ENCODE measurements at regions of chr7 and their contacts with region 1.

Region 1: DNA sequence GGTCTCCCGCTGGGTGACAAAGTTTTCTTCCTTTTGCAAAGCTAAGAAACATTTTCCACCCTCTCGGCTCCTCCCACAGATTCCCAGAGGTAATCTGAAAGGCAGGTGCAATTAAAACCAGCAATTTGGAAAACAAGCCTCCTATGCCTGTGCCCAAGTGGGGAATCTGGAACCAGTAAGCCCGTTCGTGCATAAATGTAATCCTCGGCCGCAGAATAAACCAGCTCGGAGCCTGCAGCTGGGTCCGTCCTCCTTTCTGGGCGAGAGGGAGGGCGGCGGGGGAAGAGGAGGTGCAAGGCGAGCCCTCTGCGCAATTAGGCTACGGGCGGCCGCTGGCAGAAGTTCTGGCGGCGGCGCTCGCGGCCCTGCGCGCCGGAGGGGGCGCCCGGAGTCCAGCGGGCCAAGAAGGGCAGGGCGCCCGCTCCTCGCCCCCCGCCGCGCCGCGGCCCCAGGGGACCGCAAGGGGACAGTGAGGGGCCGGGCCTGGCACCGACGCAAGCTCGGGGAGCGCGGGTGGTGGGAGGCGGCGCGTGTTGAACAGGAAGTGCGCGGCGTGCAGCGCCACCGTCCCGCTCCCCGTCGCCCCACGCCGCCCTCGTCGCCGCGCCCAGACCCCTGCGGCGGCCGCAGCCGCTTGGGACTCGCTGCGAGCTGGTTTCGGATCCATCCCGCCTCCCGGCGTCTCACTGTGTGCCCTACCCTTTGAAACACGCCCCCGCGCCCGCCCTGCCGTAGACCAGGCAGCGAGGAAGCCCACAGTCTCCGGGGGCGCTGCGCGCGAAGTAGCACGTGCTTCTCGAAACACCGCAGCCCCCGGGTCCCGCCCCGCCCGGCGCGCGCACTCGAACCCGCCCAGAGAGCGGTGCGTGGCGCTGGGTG is at the start of gene PRKAG2:
- DNase-seq: peak; percentile 74 to 87
- ATAC-seq: peak; percentile 45 to 70 (median 58)
- H3K4me3 ChIP-seq: peak within 1 kb of the TSS; percentile 86
- H3K27ac ChIP-seq: peak within 1 kb of the TSS; percentile 82
- H3K4me1 ChIP-seq: peaks cover 3% of the 10 kb centered on the region
- H3K27me3 ChIP-seq: no peaks in the 10 kb centered on the region
- CTCF ChIP-seq: no peak
- total RNA-seq, gene PRKAG2: 9.3 to 31.5 (median 15.5) TPM

Region 2: DNA sequence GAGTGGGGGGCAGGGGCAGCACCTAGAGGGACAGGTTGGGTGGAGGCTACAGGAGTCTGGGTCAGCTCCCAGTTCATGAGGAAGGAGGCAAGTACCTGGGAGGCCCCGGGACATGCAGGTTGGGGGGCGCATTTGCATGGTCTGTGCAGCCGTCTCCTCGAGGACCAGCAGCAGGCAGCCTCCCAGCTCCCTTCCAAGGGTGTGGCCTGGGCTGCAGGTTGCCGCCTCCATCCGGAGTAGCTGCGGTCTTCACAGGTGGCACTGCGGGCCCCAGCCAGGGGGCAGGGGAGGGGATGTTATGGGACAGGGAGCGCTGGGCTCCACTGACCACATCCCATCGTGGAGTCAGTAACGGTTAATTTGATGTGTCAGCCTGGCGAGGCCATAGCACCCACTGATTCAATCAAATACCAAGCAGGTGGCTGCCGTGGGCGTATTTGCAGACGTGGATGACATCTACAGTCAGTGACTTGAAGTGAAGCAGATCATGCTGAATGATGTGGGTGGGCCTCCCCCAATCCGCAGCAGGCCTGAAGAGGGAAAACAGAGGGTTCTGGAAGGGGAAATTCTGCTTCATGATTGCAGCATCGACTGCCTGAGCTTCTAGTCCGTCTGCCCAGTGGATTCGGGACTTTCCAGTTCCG is 81.8 kb before region 1 on chr7:
- intact Hi-C with region 1: loop called in 1 of 2 experiments (anchors 5 kb)
- DNase-seq: peak in 1 of 2 donors; percentile 57
- ATAC-seq: no peak
- H3K4me3 ChIP-seq: no peak overlapping the region
- H3K27ac ChIP-seq: peak overlapping the region; percentile 71
- H3K4me1 ChIP-seq: peaks cover 33% of the 10 kb centered on the region
- H3K27me3 ChIP-seq: no peaks in the 10 kb centered on the region
- CTCF ChIP-seq: no peak

Region 3: GRCh38 chr7:152145853-152146466 is 268.8 kb after region 1 on chr7:
- intact Hi-C with region 1: loop called in 1 of 2 experiments (anchors 10 kb)
- DNase-seq: no peak
- ATAC-seq: peak in 3 of 4 donors; percentile 59 to 73 (median 71)
- H3K4me3 ChIP-seq: no peak overlapping the region
- H3K27ac ChIP-seq: no peak overlapping the region
- H3K4me1 ChIP-seq: no peaks in the 10 kb centered on the region
- H3K27me3 ChIP-seq: no peaks in the 10 kb centered on the region
- CTCF ChIP-seq: peak; percentile 50